HEK293 (cell line): ENCODE measurements at regions of chr22 and their contacts with region 1.

Region 1: DNA sequence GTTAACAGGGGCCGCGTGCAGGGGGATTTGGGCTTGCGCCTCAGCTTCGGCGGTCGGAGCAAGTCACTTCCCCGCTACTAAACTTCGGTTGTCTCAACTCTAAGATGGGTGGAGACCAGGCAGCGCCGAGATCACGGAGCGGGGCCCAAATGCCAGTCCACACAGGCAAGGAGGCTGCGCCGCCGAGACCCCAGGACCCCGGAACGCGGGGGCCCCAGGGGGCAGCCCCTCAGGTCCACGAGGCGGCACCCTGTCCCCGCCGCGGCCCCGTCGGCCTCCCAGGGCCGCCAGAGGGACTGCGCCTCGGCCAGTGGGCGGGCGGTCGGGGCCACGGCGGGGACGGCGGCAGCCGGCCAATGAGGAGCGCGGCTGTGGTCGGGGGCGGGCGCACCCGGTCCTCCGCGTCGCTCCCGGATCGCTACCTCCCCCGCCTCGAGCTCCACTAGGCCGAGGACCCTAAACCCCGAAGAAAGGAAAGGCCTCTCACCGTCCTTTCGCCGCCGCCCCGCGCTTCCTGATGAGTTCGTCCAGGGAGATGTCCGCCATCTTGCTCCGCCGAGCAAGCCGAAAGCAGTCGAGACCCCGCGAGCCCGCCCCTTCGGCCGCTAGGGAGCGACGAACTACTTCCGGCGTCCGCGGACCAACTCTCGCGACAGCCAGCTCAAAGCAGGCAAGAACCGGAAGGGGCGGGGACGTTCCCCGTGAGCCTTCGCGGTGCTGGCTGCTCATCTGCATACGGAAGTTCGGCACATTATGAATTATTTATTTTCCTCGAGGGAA is at the start of gene POLDIP3:
- H3K4me3 ChIP-seq: peak within 1 kb of the TSS; percentile 90
- H3K27ac ChIP-seq: peak within 1 kb of the TSS; percentile 86
- H3K4me1 ChIP-seq: peaks cover 6% of the 10 kb centered on the region; the same call in 1 of the 2 replicates
- CTCF ChIP-seq: peak; percentile 94

Region 2: GRCh38 chr22:42412744-42413333 is 201.7 kb before region 1 on chr22:
- CTCF ChIA-PET with region 1: no interaction called
- POLR2A ChIA-PET with region 1: no interaction called
- H3K4me3 ChIP-seq: no peak overlapping the region
- H3K27ac ChIP-seq: no peak overlapping the region
- H3K4me1 ChIP-seq: no peaks in the 10 kb centered on the region
- CTCF ChIP-seq: no peak

Region 3: DNA sequence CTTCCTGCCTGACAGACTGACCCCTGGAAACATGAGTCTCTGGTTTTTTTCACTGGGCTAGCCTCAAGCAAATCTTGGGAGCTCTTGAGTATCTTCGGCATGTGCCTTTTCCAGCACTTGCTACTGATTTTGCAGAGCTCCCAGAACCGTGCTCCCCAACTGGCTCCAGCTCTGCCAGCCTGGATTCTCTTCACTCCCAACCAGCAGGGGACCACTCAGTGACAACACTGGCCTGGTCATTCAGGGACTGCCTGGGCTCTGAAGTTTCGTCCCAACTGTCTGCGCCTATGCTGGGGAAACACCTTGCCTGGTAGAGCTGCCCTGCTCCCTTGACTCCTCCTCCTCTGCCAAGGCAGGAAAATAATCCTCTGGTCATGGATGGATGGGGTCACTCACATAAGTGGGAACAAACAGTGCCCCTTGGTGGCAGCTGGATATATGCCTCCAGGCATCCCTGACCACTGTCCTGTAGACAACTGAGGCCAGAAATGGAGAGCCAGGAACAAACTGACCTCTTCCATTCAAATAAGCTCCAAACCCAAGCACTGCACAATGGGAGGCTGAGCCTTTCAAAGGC is 30.1 kb before region 1 on chr22:
- CTCF ChIA-PET with region 1: interaction called, 4 read pairs
- POLR2A ChIA-PET with region 1: interaction called, 10 read pairs
- H3K4me3 ChIP-seq: no peak overlapping the region
- H3K27ac ChIP-seq: no peak overlapping the region
- H3K4me1 ChIP-seq: no peaks in the 10 kb centered on the region
- CTCF ChIP-seq: 0 out of 2 replicates have a peak, but pooled peaks have one; percentile 12

Region 4: GRCh38 chr22:42604403-42604802 is 10.1 kb before region 1 on chr22:
- CTCF ChIA-PET with region 1: interaction called, 4 read pairs
- POLR2A ChIA-PET with region 1: interaction called, 10 read pairs
- H3K4me3 ChIP-seq: no peak overlapping the region
- H3K27ac ChIP-seq: no peak overlapping the region
- H3K4me1 ChIP-seq: 0 out of 2 replicates have a peak, but pooled peaks cover 3% of the 10 kb centered on the region
- CTCF ChIP-seq: no peak

Region 5: GRCh38 chr22:42649246-42650099 is 35.0 kb after region 1 on chr22 and contains the start of gene CYB5R3:
- CTCF ChIA-PET with region 1: no interaction called
- POLR2A ChIA-PET with region 1: interaction called, 18 read pairs
- H3K4me3 ChIP-seq: peak within 1 kb of the TSS; percentile 72
- H3K27ac ChIP-seq: peak within 1 kb of the TSS; percentile 82
- H3K4me1 ChIP-seq: peaks cover 20% of the 10 kb centered on the region
- CTCF ChIP-seq: no peak